Naive thymus-derived CD4-positive, alpha-beta T cell (primary cell): ENCODE measurements at regions of chr10 and their contacts with region 1.

Region 1: GRCh38 chr10:50593523-50594376 is 30.0 kb downstream of the SGMS1 start:
- DNase-seq: no peak
- ATAC-seq: no peak
- H3K4me3 ChIP-seq: no peak overlapping the region
- H3K4me3 Mint-ChIP-seq: no peak overlapping the region
- H3K27ac ChIP-seq: no peak overlapping the region
- H3K27ac Mint-ChIP-seq: no peak overlapping the region
- H3K4me1 ChIP-seq: peaks cover 0 to 3% of the 10 kb centered on the region in 2 donors
- H3K4me1 Mint-ChIP-seq: peaks cover 4 to 63% (median 40%) of the 10 kb centered on the region in 7 donors
- H3K27me3 ChIP-seq: no peaks in the 10 kb centered on the region
- H3K27me3 Mint-ChIP-seq: no peaks in the 10 kb centered on the region

Region 2: GRCh38 chr10:49398000-49398861 is 1195.5 kb before region 1 on chr10:
- CTCF ChIA-PET with region 1: no interaction called
- POLR2A ChIA-PET with region 1: no interaction called
- intact Hi-C with region 1: no loop called
- DNase-seq: peak in 7 of 9 donors; percentile 9 to 72 (median 23)
- ATAC-seq: peak; percentile 85
- H3K4me3 ChIP-seq: no peak overlapping the region
- H3K4me3 Mint-ChIP-seq: peak overlapping the region in 8 of 10 donors; percentile 9 to 62 (median 40)
- H3K27ac ChIP-seq: no peak overlapping the region
- H3K27ac Mint-ChIP-seq: no peak overlapping the region
- H3K4me1 ChIP-seq: peaks cover 0 to 5% of the 10 kb centered on the region in 2 donors
- H3K4me1 Mint-ChIP-seq: peaks cover 0 to 16% (median 9%) of the 10 kb centered on the region in 7 donors
- H3K27me3 ChIP-seq: peaks cover 4 to 22% of the 10 kb centered on the region in 2 donors
- H3K27me3 Mint-ChIP-seq: peaks cover 58 to 79% (median 76%) of the 10 kb centered on the region in 5 donors

Region 3: GRCh38 chr10:50577681-50578350 is 15.9 kb before region 1 on chr10:
- CTCF ChIA-PET with region 1: interaction called, 5 read pairs
- POLR2A ChIA-PET with region 1: interaction called, 3 read pairs
- intact Hi-C with region 1: loop called in 1 of 2 experiments (anchors 2 kb)
- DNase-seq: no peak
- ATAC-seq: peak; percentile 47
- H3K4me3 ChIP-seq: no peak overlapping the region
- H3K4me3 Mint-ChIP-seq: no peak overlapping the region
- H3K27ac ChIP-seq: no peak overlapping the region
- H3K27ac Mint-ChIP-seq: peak overlapping the region in 1 of 9 donors; percentile 9
- H3K4me1 ChIP-seq: peaks cover 2 to 6% of the 10 kb centered on the region in 2 donors
- H3K4me1 Mint-ChIP-seq: peaks cover 0 to 97% (median 90%) of the 10 kb centered on the region in 7 donors
- H3K27me3 ChIP-seq: no peaks in the 10 kb centered on the region
- H3K27me3 Mint-ChIP-seq: no peaks in the 10 kb centered on the region

Region 4: GRCh38 chr10:50605269-50606263 is 11.8 kb after region 1 on chr10:
- CTCF ChIA-PET with region 1: no interaction called
- POLR2A ChIA-PET with region 1: no interaction called
- intact Hi-C with region 1: loop called in 1 of 2 experiments (anchors 2 kb)
- DNase-seq: no peak
- ATAC-seq: peak; percentile 51
- H3K4me3 ChIP-seq: no peak overlapping the region
- H3K4me3 Mint-ChIP-seq: peak overlapping the region in 7 of 10 donors; percentile 2 to 67 (median 39)
- H3K27ac ChIP-seq: no peak overlapping the region
- H3K27ac Mint-ChIP-seq: peak overlapping the region in 5 of 9 donors; percentile 32 to 86 (median 68)
- H3K4me1 ChIP-seq: peaks cover 29 to 31% of the 10 kb centered on the region in 2 donors
- H3K4me1 Mint-ChIP-seq: peaks cover 30 to 86% (median 79%) of the 10 kb centered on the region in 7 donors
- H3K27me3 ChIP-seq: no peaks in the 10 kb centered on the region
- H3K27me3 Mint-ChIP-seq: no peaks in the 10 kb centered on the region